ENCODE measurements at regions of chr12 and their contacts with region 1.

Region 1: GRCh38 chr12:11676052-11676451 is 26.6 kb downstream of the ETV6 start:
- DNase-seq: no peak
- H3K4me3 ChIP-seq: no peak overlapping the region
- H3K4me3 Mint-ChIP-seq: no peak overlapping the region
- H3K27ac ChIP-seq: no peak overlapping the region
- H3K27ac Mint-ChIP-seq: peak overlapping the region in 5 of 7 donors; percentile 7 to 71 (median 56)
- H3K4me1 ChIP-seq: peaks cover 36 to 54% of the 10 kb centered on the region in 2 donors
- H3K4me1 Mint-ChIP-seq: peaks cover 81% of the 10 kb centered on the region
- H3K27me3 ChIP-seq: no peaks in the 10 kb centered on the region
- H3K27me3 Mint-ChIP-seq: no peaks in the 10 kb centered on the region
- CTCF ChIP-seq: no peak

Region 2: GRCh38 chr12:11711651-11712327 is 35.7 kb after region 1 on chr12:
- intact Hi-C with region 1: loop called in 1 of 2 experiments (anchors 5 kb)
- DNase-seq: peak; percentile 71 to 83 (median 81)
- H3K4me3 ChIP-seq: peak overlapping the region in 1 of 3 experiments; percentile 23
- H3K4me3 Mint-ChIP-seq: peak overlapping the region; percentile 3 to 47
- H3K27ac ChIP-seq: peak overlapping the region; percentile 38 to 86
- H3K27ac Mint-ChIP-seq: peak overlapping the region; percentile 87 to 97 (median 95)
- H3K4me1 ChIP-seq: peaks cover 39 to 44% of the 10 kb centered on the region in 2 donors
- H3K4me1 Mint-ChIP-seq: peaks cover 75% of the 10 kb centered on the region
- H3K27me3 ChIP-seq: no peaks in the 10 kb centered on the region
- H3K27me3 Mint-ChIP-seq: peaks cover 0 to 1% (median 0%) of the 10 kb centered on the region in 3 donors
- CTCF ChIP-seq: no peak

Measured in CD14-positive monocyte (primary cell).